Left ventricle myocardium inferior (tissue), 1 donor: ENCODE measurements at regions of chr12 and their contacts with region 1.

Region 1: GRCh38 chr12:6067152-6067916 is 57.1 kb downstream of the VWF start:
- DNase-seq: no peak
- H3K4me3 ChIP-seq: no peak overlapping the region
- H3K27ac ChIP-seq: peak overlapping the region; percentile 43
- H3K4me1 ChIP-seq: peaks cover 68% of the 10 kb centered on the region
- H3K27me3 ChIP-seq: no peaks in the 10 kb centered on the region
- CTCF ChIP-seq: peak; percentile 53

Region 2: GRCh38 chr12:6182116-6182898 is 115.0 kb after region 1 on chr12:
- intact Hi-C with region 1: loop called (anchors 10 kb)
- DNase-seq: peak; percentile 61
- H3K4me3 ChIP-seq: peak overlapping the region; percentile 10
- H3K27ac ChIP-seq: peak overlapping the region; percentile 86
- H3K4me1 ChIP-seq: peaks cover 54% of the 10 kb centered on the region
- H3K27me3 ChIP-seq: no peaks in the 10 kb centered on the region
- CTCF ChIP-seq: no peak

Region 3: DNA sequence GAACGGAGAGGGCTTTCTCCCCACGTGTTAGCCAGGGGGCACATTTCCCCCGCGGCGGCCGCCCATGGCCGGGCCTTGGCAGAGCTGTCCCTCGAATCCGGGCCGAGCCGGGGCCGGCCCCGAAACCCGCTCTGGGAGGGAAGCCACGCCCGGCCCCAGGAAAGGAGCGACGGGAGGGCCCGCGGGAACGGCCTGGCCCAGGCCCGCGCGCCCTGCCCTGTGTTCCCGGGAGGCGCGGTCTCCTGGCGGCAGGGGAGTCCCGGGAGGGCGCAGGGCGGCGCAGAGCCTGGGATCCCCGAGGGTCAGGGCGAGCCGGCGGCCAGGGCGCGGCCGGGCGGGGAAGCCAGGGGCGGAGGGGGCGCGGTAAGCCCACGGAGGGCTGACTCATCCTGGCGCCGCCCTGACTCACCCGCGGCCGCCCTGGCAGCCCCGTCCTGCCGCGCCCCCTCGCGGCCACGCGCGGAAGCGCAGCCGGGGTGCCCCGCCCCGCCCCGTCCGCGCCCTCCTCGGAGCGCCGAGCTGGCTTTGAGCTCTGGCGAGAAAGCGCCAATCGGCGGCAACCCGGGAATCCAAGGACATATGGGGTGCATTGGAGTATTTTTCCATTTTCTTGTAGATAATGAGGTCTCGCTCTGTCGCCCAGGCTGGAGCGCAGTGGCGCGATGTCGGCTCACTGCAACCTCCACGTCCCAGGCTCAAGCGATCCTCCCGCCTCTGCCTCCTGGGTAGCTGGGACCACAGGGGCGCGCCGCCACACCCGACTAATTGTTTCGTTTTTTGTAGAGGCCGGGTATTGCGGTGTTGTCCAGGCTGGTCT is 211.3 kb after region 1 on chr12:
- intact Hi-C with region 1: loop called (anchors 5 kb)
- DNase-seq: peak; percentile 83
- H3K4me3 ChIP-seq: peak overlapping the region; percentile 69
- H3K27ac ChIP-seq: peak overlapping the region; percentile 91
- H3K4me1 ChIP-seq: peaks cover 47% of the 10 kb centered on the region
- H3K27me3 ChIP-seq: peaks cover 6% of the 10 kb centered on the region
- CTCF ChIP-seq: peak; percentile 96